ENCODE measurements at regions of chr14 and their contacts with region 1.

Region 1: GRCh38 chr14:73503648-73504047 is 12.9 kb downstream of the RIOX1 start:
- DNase-seq: no peak
- H3K4me3 ChIP-seq: no peak overlapping the region
- H3K27ac ChIP-seq: no peak overlapping the region
- H3K4me1 ChIP-seq: peaks cover 0 to 4% (median 0%) of the 10 kb centered on the region in 4 donors
- H3K27me3 ChIP-seq: no peaks in the 10 kb centered on the region
- CTCF ChIP-seq: no peak
- EP300 ChIP-seq: no peak
- POLR2A ChIP-seq: no peak

Region 2: DNA sequence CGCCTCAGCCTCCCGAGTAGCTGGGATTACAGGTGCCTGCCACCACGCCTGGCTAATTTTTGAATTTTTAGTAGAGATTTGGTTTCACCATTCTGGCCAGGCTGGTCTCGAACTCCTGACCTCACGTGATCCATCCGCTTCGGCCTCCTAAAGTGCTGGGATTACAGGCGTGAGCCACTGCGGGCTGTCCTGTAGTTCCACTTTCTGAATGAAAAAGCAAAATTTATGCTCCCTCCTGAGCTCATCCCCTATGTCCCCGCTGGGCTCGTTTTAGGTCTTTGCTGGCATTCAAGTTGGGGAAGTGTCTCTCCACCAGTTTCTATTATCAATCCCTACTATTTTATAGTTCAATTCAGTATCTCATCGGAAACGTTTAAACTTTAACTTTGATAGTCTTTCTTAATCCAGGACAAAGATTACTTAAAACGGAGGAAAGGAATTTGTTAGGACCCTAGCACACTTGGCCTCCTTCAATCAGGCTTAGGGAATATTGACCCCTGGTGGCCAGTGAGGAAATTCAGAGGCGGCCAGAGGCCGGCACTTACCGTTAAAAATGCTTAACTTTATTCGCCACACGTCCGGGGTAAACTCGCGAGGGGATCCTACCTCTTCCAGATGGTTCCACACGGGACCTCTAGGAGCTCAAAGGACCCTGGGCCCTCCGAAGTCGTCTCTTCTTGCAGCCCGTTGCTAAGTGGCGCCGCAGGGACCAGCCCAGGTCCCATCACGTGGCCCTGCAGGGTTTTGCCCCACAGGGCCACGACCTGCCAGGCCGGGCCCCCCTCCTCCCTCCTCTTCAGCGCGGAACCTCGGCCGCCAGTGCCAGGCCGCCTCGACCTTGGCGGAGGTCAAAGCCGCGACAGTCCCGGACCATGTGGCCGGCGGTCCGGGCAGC is 129.7 kb after region 1 on chr14:
- intact Hi-C with region 1: loop called (anchors 2 kb)
- DNase-seq: peak; percentile 93
- H3K4me3 ChIP-seq: peak overlapping the region; percentile 59 to 69 (median 66)
- H3K27ac ChIP-seq: peak overlapping the region; percentile 66 to 83 (median 72)
- H3K4me1 ChIP-seq: peaks cover 5 to 25% (median 19%) of the 10 kb centered on the region in 4 donors
- H3K27me3 ChIP-seq: no peaks in the 10 kb centered on the region
- CTCF ChIP-seq: peak; percentile 89 to 95 (median 93)
- EP300 ChIP-seq: no peak
- POLR2A ChIP-seq: no peak

Region 3: GRCh38 chr14:73696466-73697400 is 193.1 kb after region 1 on chr14:
- intact Hi-C with region 1: no loop called
- DNase-seq: no peak
- H3K4me3 ChIP-seq: no peak overlapping the region
- H3K27ac ChIP-seq: no peak overlapping the region
- H3K4me1 ChIP-seq: no peaks in the 10 kb centered on the region
- H3K27me3 ChIP-seq: no peaks in the 10 kb centered on the region
- CTCF ChIP-seq: no peak
- EP300 ChIP-seq: no peak
- POLR2A ChIP-seq: no peak

Region 4: DNA sequence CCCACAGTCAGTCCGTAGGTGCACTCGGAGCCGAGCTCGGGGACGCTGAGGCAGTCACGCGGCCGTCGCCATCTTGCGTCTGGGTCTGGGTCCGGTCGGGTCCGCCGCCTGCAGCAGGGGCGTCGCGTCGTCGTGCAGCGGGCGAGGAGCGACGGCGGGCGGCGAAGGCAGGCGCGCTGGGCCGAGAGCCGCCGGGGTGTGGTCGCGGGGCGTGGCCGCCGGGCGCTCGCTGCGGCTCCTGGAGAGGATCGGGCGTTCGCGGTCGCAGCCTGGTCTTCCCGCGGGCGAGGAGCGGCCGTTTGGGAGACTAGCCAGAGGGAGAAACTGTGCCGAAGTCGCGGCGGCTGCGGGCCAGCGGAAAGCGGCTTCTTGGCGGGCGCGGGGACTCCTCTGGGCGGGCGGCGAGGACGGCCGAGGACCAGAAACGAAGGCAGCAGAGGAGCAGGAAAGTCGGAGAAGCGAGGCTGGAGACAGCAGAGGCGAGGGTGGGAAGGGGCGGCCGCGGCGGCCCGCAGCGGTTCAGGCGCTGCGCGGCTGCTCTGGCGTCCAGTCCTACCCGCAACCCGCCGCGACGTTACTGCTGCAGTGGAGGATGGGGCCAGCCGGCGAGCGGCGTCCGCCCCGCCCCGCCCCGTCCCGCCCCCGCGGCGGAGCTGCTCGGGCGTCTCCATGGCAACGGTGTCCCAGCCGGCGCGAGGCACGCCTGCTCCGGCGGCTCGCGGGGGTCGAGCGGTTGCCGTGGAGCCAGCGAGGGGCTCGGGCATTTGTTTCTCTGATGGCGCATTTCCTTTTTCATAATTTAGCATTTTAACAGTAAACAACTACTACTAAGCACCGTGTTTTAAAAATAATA is 210.4 kb after region 1 on chr14 and contains the start of gene PNMA1:
- intact Hi-C with region 1: loop called (anchors 10 kb)
- DNase-seq: no peak
- H3K4me3 ChIP-seq: peak within 1 kb of the TSS; percentile 70 to 97 (median 77)
- H3K27ac ChIP-seq: peak within 1 kb of the TSS; percentile 88 to 98 (median 96)
- H3K4me1 ChIP-seq: peaks cover 35 to 72% (median 67%) of the 10 kb centered on the region in 4 donors
- H3K27me3 ChIP-seq: no peaks in the 10 kb centered on the region
- CTCF ChIP-seq: no peak
- EP300 ChIP-seq: no peak
- POLR2A ChIP-seq: peak; percentile 67
- total RNA-seq, gene PNMA1: 34.8 to 74.2 (median 55.0) TPM

Region 5: DNA sequence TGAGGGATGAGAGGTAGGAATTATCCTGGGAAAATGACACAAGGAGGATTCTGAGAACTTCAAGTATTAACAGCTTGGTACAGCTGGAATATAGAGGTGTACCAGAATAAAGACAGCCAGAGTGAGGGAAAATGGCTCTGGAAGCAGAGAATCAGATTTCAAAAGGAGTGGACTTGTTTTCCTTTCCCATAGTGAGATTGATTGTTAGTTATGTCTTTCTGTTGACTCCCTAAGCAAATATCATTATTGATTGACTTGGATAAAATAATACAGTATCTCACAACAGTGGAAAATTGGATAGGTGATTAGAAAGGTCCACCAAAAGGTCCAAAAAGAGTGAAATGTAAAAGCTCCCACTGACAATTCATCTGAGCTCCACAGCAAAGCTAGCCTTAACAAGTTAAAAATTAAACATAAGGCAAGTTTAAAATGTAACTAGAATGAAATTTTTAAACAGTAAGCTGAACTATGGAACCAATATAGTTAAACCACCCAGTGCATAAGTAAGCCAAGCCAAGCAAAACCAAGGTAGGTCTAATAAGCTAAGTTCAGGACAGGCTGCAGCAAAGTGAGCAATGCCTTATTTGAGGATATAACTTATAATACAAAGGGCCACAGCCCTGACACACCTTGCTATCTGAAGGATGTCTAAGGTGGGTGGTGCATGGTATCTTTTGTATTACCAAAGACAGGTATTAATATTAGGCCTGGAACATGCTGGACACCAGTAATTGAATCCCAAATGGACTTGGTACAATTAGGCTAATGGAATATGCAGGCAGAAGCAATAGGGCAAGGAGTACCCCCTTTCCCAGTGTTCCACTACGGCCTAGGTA is 493.7 kb after region 1 on chr14:
- intact Hi-C with region 1: no loop called
- DNase-seq: no peak
- H3K4me3 ChIP-seq: no peak overlapping the region
- H3K27ac ChIP-seq: no peak overlapping the region
- H3K4me1 ChIP-seq: no peaks in the 10 kb centered on the region
- H3K27me3 ChIP-seq: no peaks in the 10 kb centered on the region
- CTCF ChIP-seq: no peak
- EP300 ChIP-seq: no peak
- POLR2A ChIP-seq: no peak

Measured in esophagus muscularis mucosa (tissue), 4 donors.